AG04449 (cell line): ENCODE measurements at regions of chr12 and their contacts with region 1.

Region 1: GRCh38 chr12:18158774-18159557 is 69.0 kb upstream of the RERGL start:
- DNase-seq: no peak
- H3K4me3 ChIP-seq: no peak overlapping the region
- CTCF ChIP-seq: peak; percentile 78

Region 2: GRCh38 chr12:18139989-18140596 is 18.9 kb before region 1 on chr12:
- CTCF ChIA-PET with region 1: interaction called, 27 read pairs
- POLR2A ChIA-PET with region 1: no interaction called
- DNase-seq: no peak
- H3K4me3 ChIP-seq: no peak overlapping the region
- CTCF ChIP-seq: no peak

Region 3: GRCh38 chr12:18146363-18146762 is 12.6 kb before region 1 on chr12:
- CTCF ChIA-PET with region 1: interaction called, 27 read pairs
- POLR2A ChIA-PET with region 1: no interaction called
- DNase-seq: no peak
- H3K4me3 ChIP-seq: no peak overlapping the region
- CTCF ChIP-seq: no peak

Region 4: GRCh38 chr12:18171571-18171970 is 12.6 kb after region 1 on chr12:
- CTCF ChIA-PET with region 1: interaction called, 15 read pairs
- POLR2A ChIA-PET with region 1: no interaction called
- DNase-seq: no peak
- H3K4me3 ChIP-seq: no peak overlapping the region
- CTCF ChIP-seq: no peak

Region 5: GRCh38 chr12:18224745-18225144 is 65.8 kb after region 1 on chr12:
- CTCF ChIA-PET with region 1: interaction called, 24 read pairs
- POLR2A ChIA-PET with region 1: no interaction called
- DNase-seq: no peak
- H3K4me3 ChIP-seq: no peak overlapping the region
- CTCF ChIP-seq: peak; percentile 27

Region 6: GRCh38 chr12:18439541-18439940 is 280.6 kb after region 1 on chr12:
- CTCF ChIA-PET with region 1: no interaction called
- POLR2A ChIA-PET with region 1: no interaction called
- DNase-seq: no peak
- H3K4me3 ChIP-seq: no peak overlapping the region
- CTCF ChIP-seq: no peak